Naive thymus-derived CD4-positive, alpha-beta T cell (primary cell): ENCODE measurements at regions of chr9 and their contacts with region 1.

Region 1: DNA sequence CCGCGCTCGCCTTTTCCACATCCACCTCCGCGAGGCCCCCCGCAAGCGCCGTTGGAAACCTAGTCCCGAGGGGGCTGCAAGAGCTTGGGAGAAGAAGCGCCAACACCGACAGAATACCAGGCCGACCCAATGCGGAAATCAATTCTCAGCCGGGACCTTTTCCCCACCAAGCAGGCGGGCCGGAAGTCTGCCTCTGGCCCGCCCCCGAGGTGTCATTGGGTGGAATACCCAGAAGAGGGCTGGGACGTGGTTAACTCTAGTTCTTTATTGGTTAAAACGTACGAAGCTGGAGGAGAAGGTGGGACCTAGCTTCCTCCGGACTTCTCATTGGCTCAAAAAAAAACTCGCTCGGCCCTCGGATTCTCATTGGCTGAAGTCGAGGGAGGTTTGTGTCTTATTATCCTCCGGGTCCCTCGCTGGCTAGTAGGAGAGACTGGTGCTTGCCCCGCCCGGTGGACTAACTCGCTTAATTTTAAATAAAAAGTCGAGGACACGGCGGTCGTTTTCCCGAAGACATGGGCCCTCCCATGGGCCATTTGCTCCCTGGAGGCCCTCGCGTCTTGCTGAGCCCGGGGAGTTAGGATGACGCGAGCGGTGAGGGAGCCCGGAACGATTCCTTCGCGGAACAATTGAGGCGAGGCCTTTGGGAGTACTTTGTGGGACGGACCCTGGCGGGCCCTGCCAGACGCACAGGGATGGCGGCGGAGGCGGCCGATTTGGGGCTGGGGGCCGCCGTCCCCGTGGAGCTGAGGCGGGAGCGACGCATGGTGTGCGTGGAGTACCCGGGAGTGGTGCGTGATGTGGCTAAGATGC is at the start of gene GTF3C5:
- DNase-seq: peak; percentile 77 to 97 (median 94)
- ATAC-seq: peak; percentile 98
- H3K4me3 ChIP-seq: peak within 1 kb of the TSS; percentile 83
- H3K4me3 Mint-ChIP-seq: peak within 1 kb of the TSS; percentile 87 to 100 (median 98)
- H3K27ac ChIP-seq: peak within 1 kb of the TSS; percentile 90
- H3K27ac Mint-ChIP-seq: peak within 1 kb of the TSS; percentile 94 to 99 (median 98)
- H3K4me1 ChIP-seq: peaks cover 13 to 25% of the 10 kb centered on the region in 2 donors
- H3K4me1 Mint-ChIP-seq: peaks cover 34 to 81% (median 59%) of the 10 kb centered on the region in 7 donors
- H3K27me3 ChIP-seq: no peaks in the 10 kb centered on the region
- H3K27me3 Mint-ChIP-seq: no peaks in the 10 kb centered on the region
- total RNA-seq, gene GTF3C5: 43.9 to 77.9 (median 73.9) TPM

Region 2: DNA sequence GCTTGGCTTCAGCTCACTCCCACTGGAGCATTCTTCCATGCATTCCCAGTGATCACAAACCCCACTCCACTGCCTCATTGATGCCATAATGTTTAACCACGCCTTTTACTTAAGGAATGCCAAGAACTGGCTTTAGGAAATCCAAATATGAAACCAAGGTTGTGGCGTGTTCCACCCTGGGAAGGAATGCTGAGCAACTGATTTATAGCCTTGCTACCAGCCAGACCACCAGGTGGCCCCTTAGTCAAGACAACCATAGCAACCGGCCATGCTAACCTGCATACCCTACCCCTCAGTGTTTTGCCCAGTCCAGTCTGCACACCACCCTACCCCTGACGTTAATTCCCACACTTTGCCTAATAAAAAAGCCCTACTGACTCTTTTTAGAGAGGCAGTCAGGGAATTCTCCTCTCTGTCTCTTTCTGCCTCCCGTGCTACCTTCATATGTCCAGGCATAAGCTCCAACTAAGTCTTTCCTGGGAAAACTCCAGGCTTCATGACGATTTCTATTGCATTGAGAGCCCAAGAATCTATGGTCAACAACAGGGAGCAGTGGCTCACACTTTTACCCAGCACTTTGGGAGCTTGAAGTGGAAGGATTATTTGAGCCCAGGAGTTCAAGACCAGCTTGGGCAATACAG is 1663.6 kb before region 1 on chr9:
- CTCF ChIA-PET with region 1: no interaction called
- POLR2A ChIA-PET with region 1: no interaction called
- intact Hi-C with region 1: loop called in 1 of 2 experiments (anchors 5 kb)
- DNase-seq: no peak
- ATAC-seq: no peak
- H3K4me3 ChIP-seq: no peak overlapping the region
- H3K4me3 Mint-ChIP-seq: no peak overlapping the region
- H3K27ac ChIP-seq: no peak overlapping the region
- H3K27ac Mint-ChIP-seq: peak overlapping the region in 1 of 9 donors; percentile 31
- H3K4me1 ChIP-seq: peaks cover 0 to under 1% of the 10 kb centered on the region in 2 donors
- H3K4me1 Mint-ChIP-seq: peaks cover 1 to 43% (median 19%) of the 10 kb centered on the region in 7 donors
- H3K27me3 ChIP-seq: no peaks in the 10 kb centered on the region
- H3K27me3 Mint-ChIP-seq: no peaks in the 10 kb centered on the region

Region 3: DNA sequence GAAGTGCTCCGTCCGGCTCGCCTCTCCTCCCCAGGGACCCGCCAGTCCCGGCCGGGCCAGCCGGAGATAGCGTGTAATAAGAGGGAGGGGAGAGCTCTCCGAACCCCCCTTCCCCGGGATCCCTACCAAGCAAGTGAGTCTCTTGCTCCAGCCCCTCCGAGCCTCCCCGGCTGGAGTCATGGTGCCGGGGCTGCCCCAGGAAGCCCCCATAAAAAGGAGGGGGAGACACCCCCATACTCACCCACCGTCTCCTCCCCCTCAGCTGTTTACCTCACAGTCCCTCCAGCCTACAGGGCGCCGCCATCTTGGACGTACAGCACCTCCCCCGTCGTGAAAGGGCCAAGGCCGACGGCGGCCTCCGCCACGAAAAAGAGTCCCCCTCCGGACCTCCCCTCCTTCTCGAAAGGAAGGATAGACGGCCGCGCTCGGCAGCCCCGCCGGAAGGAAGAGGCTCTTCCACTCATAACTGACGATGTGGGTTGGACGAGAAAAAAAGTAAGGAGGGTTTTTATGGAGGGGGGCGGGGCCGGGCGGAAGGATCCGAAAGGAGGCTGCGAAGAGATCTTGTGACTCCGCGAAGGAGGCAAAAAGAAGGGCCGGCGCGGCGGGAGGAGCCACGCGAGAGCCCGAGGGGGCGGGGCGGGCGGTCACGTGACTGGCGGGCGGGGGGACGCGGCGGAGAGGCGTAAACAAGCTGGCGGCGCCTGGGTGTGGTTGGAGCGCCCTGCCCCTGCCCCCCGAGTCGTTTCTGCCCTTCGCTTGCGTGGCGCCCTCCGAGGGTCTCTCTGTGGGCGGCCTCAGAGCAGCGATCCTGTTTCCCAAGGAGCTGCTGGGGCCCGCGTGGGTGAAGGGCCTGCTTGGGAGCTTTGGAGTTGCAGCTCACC is 86.0 kb before region 1 on chr9 and contains the start of gene TSC1:
- CTCF ChIA-PET with region 1: no interaction called
- POLR2A ChIA-PET with region 1: interaction called, 15 read pairs
- intact Hi-C with region 1: loop called (anchors 1 kb)
- DNase-seq: peak; percentile 96 to 99 (median 98)
- ATAC-seq: peak; percentile 94
- H3K4me3 ChIP-seq: peak within 1 kb of the TSS; percentile 93
- H3K4me3 Mint-ChIP-seq: peak within 1 kb of the TSS; percentile 90 to 99 (median 98)
- H3K27ac ChIP-seq: peak within 1 kb of the TSS; percentile 94
- H3K27ac Mint-ChIP-seq: peak within 1 kb of the TSS; percentile 99 to 100 (median 100)
- H3K4me1 ChIP-seq: peaks cover 8 to 14% of the 10 kb centered on the region in 2 donors
- H3K4me1 Mint-ChIP-seq: peaks cover 15 to 45% (median 27%) of the 10 kb centered on the region in 7 donors
- H3K27me3 ChIP-seq: no peaks in the 10 kb centered on the region
- H3K27me3 Mint-ChIP-seq: peaks cover 0 to 3% (median 0%) of the 10 kb centered on the region in 5 donors
- total RNA-seq, gene TSC1: 38.1 to 98.3 (median 59.6) TPM

Region 4: GRCh38 chr9:133121198-133121939 is 90.8 kb after region 1 on chr9 and contains the start of gene RALGDS:
- CTCF ChIA-PET with region 1: no interaction called
- POLR2A ChIA-PET with region 1: interaction called, 5 read pairs
- intact Hi-C with region 1: loop called (anchors 1 kb)
- DNase-seq: peak; percentile 79 to 93 (median 88)
- ATAC-seq: peak; percentile 91
- H3K4me3 ChIP-seq: peak within 1 kb of the TSS; percentile 58
- H3K4me3 Mint-ChIP-seq: peak within 1 kb of the TSS; percentile 78 to 88 (median 82)
- H3K27ac ChIP-seq: peak within 1 kb of the TSS; percentile 93
- H3K27ac Mint-ChIP-seq: peak within 1 kb of the TSS; percentile 58 to 99 (median 98)
- H3K4me1 ChIP-seq: peaks cover 22 to 52% of the 10 kb centered on the region in 2 donors
- H3K4me1 Mint-ChIP-seq: peaks cover 27 to 74% (median 47%) of the 10 kb centered on the region in 7 donors
- H3K27me3 ChIP-seq: no peaks in the 10 kb centered on the region
- H3K27me3 Mint-ChIP-seq: no peaks in the 10 kb centered on the region
- total RNA-seq, gene RALGDS: 73.9 to 123 (median 79.7) TPM

Region 5: DNA sequence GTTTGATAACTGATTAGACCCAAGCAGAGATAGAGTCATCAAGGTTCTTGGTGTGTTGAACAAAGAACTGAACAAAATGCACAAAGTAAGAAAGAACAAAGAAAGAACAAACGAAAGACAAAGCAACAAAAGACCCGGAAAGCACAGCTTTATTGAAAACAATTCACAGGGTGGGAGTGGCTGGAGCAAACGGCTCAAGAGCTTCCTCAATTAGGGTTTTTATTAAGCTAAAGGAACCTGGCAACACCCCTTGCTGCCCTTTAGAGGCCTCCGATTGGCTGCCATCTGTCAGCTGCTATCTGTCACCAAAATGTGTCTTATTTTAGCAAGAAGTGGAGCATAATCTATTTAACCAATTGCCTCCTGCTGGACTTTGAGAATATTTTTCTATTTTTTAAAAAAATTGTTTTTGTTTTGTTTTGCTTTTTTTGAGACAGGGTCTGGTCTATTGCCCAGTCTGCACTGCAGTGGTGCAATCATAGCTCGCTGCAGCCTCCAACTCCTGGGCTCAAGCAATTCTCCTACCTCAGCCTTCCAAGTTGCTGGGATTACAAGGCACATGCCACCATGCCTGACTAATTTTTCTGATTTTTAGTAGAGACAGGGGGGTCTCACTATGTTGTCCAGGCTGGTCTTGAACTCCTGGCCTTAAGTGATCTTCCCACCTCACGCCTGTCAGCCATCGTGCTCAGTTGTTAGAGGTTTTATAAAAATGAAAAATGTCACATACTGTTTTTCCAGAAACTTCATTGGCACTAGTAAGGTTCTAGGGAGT is 252.1 kb after region 1 on chr9:
- CTCF ChIA-PET with region 1: no interaction called
- POLR2A ChIA-PET with region 1: no interaction called
- intact Hi-C with region 1: no loop called
- DNase-seq: no peak
- ATAC-seq: peak; percentile 61
- H3K4me3 ChIP-seq: no peak overlapping the region
- H3K4me3 Mint-ChIP-seq: no peak overlapping the region
- H3K27ac ChIP-seq: no peak overlapping the region
- H3K27ac Mint-ChIP-seq: no peak overlapping the region
- H3K4me1 ChIP-seq: no peaks in the 10 kb centered on the region
- H3K4me1 Mint-ChIP-seq: peaks cover 0 to 4% (median 0%) of the 10 kb centered on the region in 7 donors
- H3K27me3 ChIP-seq: no peaks in the 10 kb centered on the region
- H3K27me3 Mint-ChIP-seq: peaks cover 3 to 21% (median 7%) of the 10 kb centered on the region in 5 donors

Region 6: DNA sequence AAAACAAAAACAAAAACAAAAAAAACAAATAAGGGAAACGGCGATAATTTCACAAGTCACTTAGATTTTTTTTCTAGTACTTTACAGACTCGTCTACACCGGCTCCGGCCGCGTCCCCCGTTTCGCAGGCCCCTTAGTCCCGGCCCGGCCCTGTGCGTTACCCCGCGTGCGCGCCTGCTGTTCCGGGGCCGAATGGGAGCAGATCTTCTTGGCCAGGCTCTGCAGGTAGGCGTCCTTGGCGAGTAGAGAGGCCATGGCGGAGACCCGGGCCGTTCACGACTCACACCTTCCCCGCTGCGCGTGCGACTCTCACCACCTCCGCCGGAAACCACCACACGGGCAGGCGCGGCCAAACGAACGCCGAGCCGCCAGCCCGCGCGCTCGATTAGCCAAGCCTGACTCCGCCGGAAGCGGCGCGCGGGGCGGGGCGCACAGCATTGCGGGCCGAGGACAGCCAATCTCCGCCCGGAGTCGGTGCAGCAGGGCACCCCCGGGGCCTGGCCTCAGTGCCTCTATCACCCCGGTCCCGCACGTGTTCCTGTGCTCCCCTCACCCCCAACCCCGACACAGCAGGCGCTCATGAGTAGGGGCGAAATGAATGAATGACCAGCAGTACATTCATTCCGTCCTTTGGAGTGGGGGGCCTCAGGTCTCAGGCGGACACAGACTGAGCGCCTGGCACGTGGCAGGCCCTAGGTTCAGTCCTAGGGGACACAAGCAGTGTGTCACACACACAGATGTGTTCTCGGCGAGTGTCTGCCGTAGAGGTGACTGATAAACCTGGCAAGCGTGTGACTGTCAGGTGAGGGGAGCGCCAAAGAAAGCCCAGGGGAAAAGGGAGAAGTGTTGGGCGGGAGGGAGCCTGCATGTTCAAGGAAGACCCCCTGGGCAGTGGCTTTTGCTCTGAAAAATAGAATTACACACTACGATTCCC is 305.6 kb after region 1 on chr9 and contains the start of gene SURF6:
- CTCF ChIA-PET with region 1: no interaction called
- POLR2A ChIA-PET with region 1: interaction called, 5 read pairs
- intact Hi-C with region 1: loop called in 1 of 2 experiments (anchors 5 kb)
- DNase-seq: peak; percentile 90 to 96 (median 93)
- ATAC-seq: peak; percentile 98
- H3K4me3 ChIP-seq: peak within 1 kb of the TSS; percentile 92
- H3K4me3 Mint-ChIP-seq: peak within 1 kb of the TSS; percentile 93 to 98 (median 96)
- H3K27ac ChIP-seq: peak within 1 kb of the TSS; percentile 82
- H3K27ac Mint-ChIP-seq: peak within 1 kb of the TSS; percentile 90 to 96 (median 94)
- H3K4me1 ChIP-seq: peaks cover 21 to 31% of the 10 kb centered on the region in 2 donors
- H3K4me1 Mint-ChIP-seq: peaks cover 22 to 59% (median 38%) of the 10 kb centered on the region in 7 donors
- H3K27me3 ChIP-seq: no peaks in the 10 kb centered on the region
- H3K27me3 Mint-ChIP-seq: no peaks in the 10 kb centered on the region
- total RNA-seq, gene SURF6: 15.4 to 33.5 (median 23.4) TPM

Region 7: DNA sequence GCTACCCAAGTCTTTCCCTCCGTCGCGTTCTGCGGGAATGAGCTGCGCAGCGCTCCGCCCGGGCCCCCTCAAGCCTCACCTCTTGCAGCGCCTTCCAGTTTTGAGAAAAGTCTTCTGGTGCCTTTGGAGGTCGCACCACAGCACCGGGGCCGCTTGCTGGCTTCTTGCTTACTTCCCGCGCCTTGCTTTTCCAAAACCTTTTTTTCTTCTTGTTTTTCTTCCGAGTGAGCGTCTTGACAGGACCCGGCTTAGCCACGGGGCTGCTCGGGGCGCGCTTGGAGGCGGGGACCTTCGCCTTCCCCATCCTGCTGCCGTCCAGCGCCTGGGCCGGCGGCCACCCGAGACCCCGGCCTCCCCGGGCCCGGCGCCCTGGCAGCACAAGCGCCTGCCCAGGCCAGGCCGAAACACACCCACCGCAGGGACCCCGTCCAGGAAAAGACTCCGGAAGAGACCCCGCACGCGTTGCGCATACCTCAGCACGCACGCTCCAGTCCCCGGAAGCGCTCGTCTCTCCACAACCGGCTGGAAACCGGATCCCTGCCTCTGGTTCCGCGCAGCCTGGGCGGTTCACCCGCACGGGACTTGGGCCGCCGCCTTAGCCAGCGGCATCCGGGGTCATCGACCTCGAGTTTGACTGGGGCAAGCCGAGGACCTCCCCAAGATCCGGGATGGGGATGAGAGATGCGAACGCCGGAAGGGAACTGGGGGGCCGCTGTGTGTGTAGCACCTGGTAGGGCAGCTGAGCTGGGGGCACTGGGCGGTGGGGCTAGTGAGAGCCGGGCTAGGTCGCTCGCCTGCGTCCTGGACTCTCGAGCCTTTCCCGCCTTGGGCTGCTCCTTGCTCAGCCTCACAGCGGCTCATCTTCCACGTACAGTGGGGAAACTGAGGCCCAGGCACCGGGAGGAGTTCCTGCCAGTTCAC is 387.3 kb after region 1 on chr9 and contains the start of gene REXO4:
- CTCF ChIA-PET with region 1: no interaction called
- POLR2A ChIA-PET with region 1: no interaction called
- intact Hi-C with region 1: loop called in 1 of 2 experiments (anchors 1 kb)
- DNase-seq: peak; percentile 73 to 88 (median 84)
- ATAC-seq: peak; percentile 93
- H3K4me3 ChIP-seq: peak within 1 kb of the TSS; percentile 87
- H3K4me3 Mint-ChIP-seq: peak within 1 kb of the TSS; percentile 88 to 93 (median 91)
- H3K27ac ChIP-seq: peak within 1 kb of the TSS; percentile 80
- H3K27ac Mint-ChIP-seq: peak within 1 kb of the TSS; percentile 81 to 94 (median 91)
- H3K4me1 ChIP-seq: peaks cover 13 to 14% of the 10 kb centered on the region in 2 donors
- H3K4me1 Mint-ChIP-seq: peaks cover 32 to 60% (median 54%) of the 10 kb centered on the region in 7 donors
- H3K27me3 ChIP-seq: no peaks in the 10 kb centered on the region
- H3K27me3 Mint-ChIP-seq: peaks cover 0 to 3% (median 0%) of the 10 kb centered on the region in 5 donors
- total RNA-seq, gene REXO4: 17.8 to 44.1 (median 28.6) TPM